ENCODE measurements at regions of chr7 and their contacts with region 1.

Region 1: GRCh38 chr7:55534175-55534915 is 38.0 kb downstream of the VOPP1 start:
- DNase-seq: peak in 3 of 9 donors; percentile 7 to 79 (median 36)
- ATAC-seq: peak; percentile 75
- H3K4me3 ChIP-seq: no peak overlapping the region
- H3K4me3 Mint-ChIP-seq: peak overlapping the region; percentile 75 to 86 (median 82)
- H3K27ac ChIP-seq: no peak overlapping the region
- H3K27ac Mint-ChIP-seq: peak overlapping the region; percentile 74 to 98 (median 83)
- H3K4me1 ChIP-seq: peaks cover 57 to 75% of the 10 kb centered on the region in 2 donors
- H3K4me1 Mint-ChIP-seq: peaks cover 73 to 98% (median 90%) of the 10 kb centered on the region in 7 donors
- H3K27me3 ChIP-seq: no peaks in the 10 kb centered on the region
- H3K27me3 Mint-ChIP-seq: peaks cover 0 to 2% (median 0%) of the 10 kb centered on the region in 5 donors

Region 2: GRCh38 chr7:55309040-55309991 is 225.0 kb before region 1 on chr7:
- CTCF ChIA-PET with region 1: no interaction called
- POLR2A ChIA-PET with region 1: no interaction called
- intact Hi-C with region 1: loop called in 1 of 2 experiments (anchors 5 kb)
- DNase-seq: peak in 2 of 9 donors; percentile 10 to 61
- ATAC-seq: peak; percentile 85
- H3K4me3 ChIP-seq: no peak overlapping the region
- H3K4me3 Mint-ChIP-seq: peak overlapping the region in 1 of 10 donors; percentile 52
- H3K27ac ChIP-seq: no peak overlapping the region
- H3K27ac Mint-ChIP-seq: peak overlapping the region in 1 of 9 donors; percentile 74
- H3K4me1 ChIP-seq: peaks cover 0 to 41% of the 10 kb centered on the region in 2 donors
- H3K4me1 Mint-ChIP-seq: peaks cover 0 to 33% (median 0%) of the 10 kb centered on the region in 7 donors
- H3K27me3 ChIP-seq: no peaks in the 10 kb centered on the region
- H3K27me3 Mint-ChIP-seq: peaks cover 0 to 10% (median 6%) of the 10 kb centered on the region in 5 donors

Region 3: GRCh38 chr7:55396225-55396785 is 138.0 kb before region 1 on chr7:
- CTCF ChIA-PET with region 1: no interaction called
- POLR2A ChIA-PET with region 1: no interaction called
- intact Hi-C with region 1: no loop called
- DNase-seq: no peak
- ATAC-seq: no peak
- H3K4me3 ChIP-seq: no peak overlapping the region
- H3K4me3 Mint-ChIP-seq: no peak overlapping the region
- H3K27ac ChIP-seq: no peak overlapping the region
- H3K27ac Mint-ChIP-seq: no peak overlapping the region
- H3K4me1 ChIP-seq: no peaks in the 10 kb centered on the region
- H3K4me1 Mint-ChIP-seq: peaks cover 0 to 2% (median 0%) of the 10 kb centered on the region in 7 donors
- H3K27me3 ChIP-seq: no peaks in the 10 kb centered on the region
- H3K27me3 Mint-ChIP-seq: no peaks in the 10 kb centered on the region

Region 4: GRCh38 chr7:55469271-55469681 is 65.1 kb before region 1 on chr7:
- CTCF ChIA-PET with region 1: interaction called, 5 read pairs
- POLR2A ChIA-PET with region 1: interaction called, 10 read pairs
- intact Hi-C with region 1: loop called (anchors 1 to 5 kb)
- DNase-seq: peak in 7 of 9 donors; percentile 57 to 85 (median 76)
- ATAC-seq: peak; percentile 86
- H3K4me3 ChIP-seq: peak overlapping the region; percentile 21
- H3K4me3 Mint-ChIP-seq: peak overlapping the region; percentile 33 to 75 (median 68)
- H3K27ac ChIP-seq: peak overlapping the region; percentile 70
- H3K27ac Mint-ChIP-seq: peak overlapping the region; percentile 85 to 97 (median 93)
- H3K4me1 ChIP-seq: peaks cover 31 to 76% of the 10 kb centered on the region in 2 donors
- H3K4me1 Mint-ChIP-seq: peaks cover 25 to 86% (median 74%) of the 10 kb centered on the region in 7 donors
- H3K27me3 ChIP-seq: no peaks in the 10 kb centered on the region
- H3K27me3 Mint-ChIP-seq: no peaks in the 10 kb centered on the region

Region 5: GRCh38 chr7:55515569-55516279 is 18.6 kb before region 1 on chr7:
- CTCF ChIA-PET with region 1: interaction called, 3 read pairs
- POLR2A ChIA-PET with region 1: no interaction called
- intact Hi-C with region 1: loop called in 1 of 2 experiments (anchors 2 kb)
- DNase-seq: no peak
- ATAC-seq: no peak
- H3K4me3 ChIP-seq: no peak overlapping the region
- H3K4me3 Mint-ChIP-seq: peak overlapping the region in 1 of 10 donors; percentile 4
- H3K27ac ChIP-seq: no peak overlapping the region
- H3K27ac Mint-ChIP-seq: peak overlapping the region in 6 of 9 donors; percentile 8 to 59 (median 20)
- H3K4me1 ChIP-seq: peaks cover 0 to 23% of the 10 kb centered on the region in 2 donors
- H3K4me1 Mint-ChIP-seq: peaks cover 25 to 55% (median 47%) of the 10 kb centered on the region in 7 donors
- H3K27me3 ChIP-seq: no peaks in the 10 kb centered on the region
- H3K27me3 Mint-ChIP-seq: no peaks in the 10 kb centered on the region

Region 6: GRCh38 chr7:55887821-55888247 is 353.5 kb after region 1 on chr7:
- CTCF ChIA-PET with region 1: no interaction called
- POLR2A ChIA-PET with region 1: no interaction called
- intact Hi-C with region 1: loop called in 1 of 2 experiments (anchors 1 kb)
- DNase-seq: peak in 2 of 9 donors; percentile 2 to 6
- ATAC-seq: no peak
- H3K4me3 ChIP-seq: peak overlapping the region; percentile 46
- H3K4me3 Mint-ChIP-seq: peak overlapping the region; percentile 82 to 89 (median 86)
- H3K27ac ChIP-seq: peak overlapping the region; percentile 61
- H3K27ac Mint-ChIP-seq: peak overlapping the region; percentile 83 to 94 (median 90)
- H3K4me1 ChIP-seq: no peaks in the 10 kb centered on the region
- H3K4me1 Mint-ChIP-seq: peaks cover 0 to 10% (median 5%) of the 10 kb centered on the region in 7 donors
- H3K27me3 ChIP-seq: no peaks in the 10 kb centered on the region
- H3K27me3 Mint-ChIP-seq: no peaks in the 10 kb centered on the region

Region 7: GRCh38 chr7:56206420-56206819 is 672.1 kb after region 1 on chr7:
- CTCF ChIA-PET with region 1: no interaction called
- POLR2A ChIA-PET with region 1: no interaction called
- intact Hi-C with region 1: loop called in 1 of 2 experiments (anchors 5 kb)
- DNase-seq: no peak
- ATAC-seq: no peak
- H3K4me3 ChIP-seq: no peak overlapping the region
- H3K4me3 Mint-ChIP-seq: no peak overlapping the region
- H3K27ac ChIP-seq: no peak overlapping the region
- H3K27ac Mint-ChIP-seq: no peak overlapping the region
- H3K4me1 ChIP-seq: no peaks in the 10 kb centered on the region
- H3K4me1 Mint-ChIP-seq: no peaks in the 10 kb centered on the region
- H3K27me3 ChIP-seq: no peaks in the 10 kb centered on the region
- H3K27me3 Mint-ChIP-seq: peaks cover 0 to 15% (median 4%) of the 10 kb centered on the region in 5 donors